A673 (cell line): ENCODE measurements at regions of chr2 and their contacts with region 1.

Region 1: DNA sequence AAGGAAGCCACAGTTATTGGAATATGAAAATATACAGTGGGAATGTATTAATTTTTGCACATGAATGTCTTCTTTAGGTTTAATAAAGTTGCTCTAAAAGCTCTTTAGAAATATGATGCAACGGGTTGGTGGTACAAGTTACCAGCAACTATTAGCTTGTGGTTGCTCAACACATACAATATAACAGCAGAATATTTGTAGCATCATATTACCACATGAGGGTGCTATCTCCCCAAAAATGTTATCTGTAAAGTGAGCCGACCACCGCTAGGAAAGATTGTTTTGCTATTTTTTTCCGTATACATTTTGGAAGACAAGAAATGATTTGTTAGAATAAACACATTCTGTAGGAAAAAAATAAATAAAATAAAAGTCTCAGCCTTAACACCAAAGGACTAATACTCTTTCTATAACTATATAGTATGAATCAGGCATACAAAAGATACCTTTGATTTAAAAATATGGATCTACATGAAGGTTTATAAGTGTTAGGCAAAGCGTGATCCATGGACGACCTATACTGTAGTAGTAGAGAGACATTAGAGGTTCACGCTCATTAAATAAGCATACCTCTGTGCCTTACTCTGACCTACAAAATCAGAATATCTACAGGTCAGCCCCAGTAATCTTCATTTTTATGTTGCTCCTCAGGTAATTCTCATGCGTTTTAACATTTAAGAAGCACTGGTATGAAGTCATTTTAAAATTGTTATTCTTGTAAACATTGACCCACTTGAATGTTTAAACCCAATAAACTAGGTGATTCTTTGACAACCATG is 1110.6 kb upstream of the ACVR2A start:
- DNase-seq: peak; percentile 81
- H3K4me3 ChIP-seq: no peak overlapping the region
- H3K27ac ChIP-seq: no peak overlapping the region
- H3K4me1 ChIP-seq: no peaks in the 10 kb centered on the region
- H3K27me3 ChIP-seq: no peaks in the 10 kb centered on the region
- CTCF ChIP-seq: peak; percentile 78

Region 2: DNA sequence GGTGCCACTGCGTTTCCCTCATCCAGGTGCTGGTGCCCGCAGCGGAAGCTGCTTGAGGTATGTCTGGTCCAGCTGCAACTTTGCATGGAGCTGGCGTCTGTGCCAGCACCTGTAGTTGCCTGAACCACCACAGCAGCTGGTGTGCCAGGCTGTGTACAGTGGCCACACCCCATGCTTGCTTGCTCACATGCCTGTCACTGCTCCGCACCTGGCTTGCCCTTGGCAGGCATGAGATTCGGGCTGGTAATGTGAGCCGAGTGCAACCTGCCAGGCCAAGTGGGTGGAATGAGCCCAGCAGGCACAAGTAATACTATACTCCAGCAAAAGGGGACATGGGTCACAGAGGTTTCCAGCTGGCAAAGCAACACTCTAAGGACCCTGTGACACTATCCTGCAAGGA is 12.7 kb before region 1 on chr2:
- CTCF ChIA-PET with region 1: no interaction called
- POLR2A ChIA-PET with region 1: no interaction called
- intact Hi-C with region 1: no loop called
- DNase-seq: no peak
- H3K4me3 ChIP-seq: no peak overlapping the region
- H3K27ac ChIP-seq: no peak overlapping the region
- H3K4me1 ChIP-seq: no peaks in the 10 kb centered on the region
- H3K27me3 ChIP-seq: no peaks in the 10 kb centered on the region
- CTCF ChIP-seq: no peak

Region 3: GRCh38 chr2:146927080-146927711 is 193.0 kb after region 1 on chr2:
- CTCF ChIA-PET with region 1: no interaction called
- POLR2A ChIA-PET with region 1: no interaction called
- intact Hi-C with region 1: loop called (anchors 5 kb)
- DNase-seq: peak; percentile 73
- H3K4me3 ChIP-seq: no peak overlapping the region
- H3K27ac ChIP-seq: no peak overlapping the region
- H3K4me1 ChIP-seq: no peaks in the 10 kb centered on the region
- H3K27me3 ChIP-seq: no peaks in the 10 kb centered on the region
- CTCF ChIP-seq: peak; percentile 73

Region 4: GRCh38 chr2:147331790-147332419 is 597.7 kb after region 1 on chr2:
- CTCF ChIA-PET with region 1: interaction called, 3 read pairs
- POLR2A ChIA-PET with region 1: no interaction called
- intact Hi-C with region 1: loop called (anchors 5 kb)
- DNase-seq: peak; percentile 57
- H3K4me3 ChIP-seq: no peak overlapping the region
- H3K27ac ChIP-seq: no peak overlapping the region
- H3K4me1 ChIP-seq: no peaks in the 10 kb centered on the region
- H3K27me3 ChIP-seq: no peaks in the 10 kb centered on the region
- CTCF ChIP-seq: peak; percentile 80

Region 5: GRCh38 chr2:147910990-147911473 is 1176.8 kb after region 1 on chr2:
- CTCF ChIA-PET with region 1: interaction called, 3 read pairs
- POLR2A ChIA-PET with region 1: no interaction called
- intact Hi-C with region 1: loop called (anchors 2 kb)
- DNase-seq: peak; percentile 83
- H3K4me3 ChIP-seq: no peak overlapping the region
- H3K27ac ChIP-seq: peak overlapping the region; percentile 14
- H3K4me1 ChIP-seq: peaks cover 32% of the 10 kb centered on the region
- H3K27me3 ChIP-seq: no peaks in the 10 kb centered on the region
- CTCF ChIP-seq: peak; percentile 79

Region 6: GRCh38 chr2:148509288-148509902 is 1775.2 kb after region 1 on chr2:
- CTCF ChIA-PET with region 1: no interaction called
- POLR2A ChIA-PET with region 1: no interaction called
- intact Hi-C with region 1: loop called (anchors 5 kb)
- DNase-seq: peak; percentile 89
- H3K4me3 ChIP-seq: peak overlapping the region; percentile 25
- H3K27ac ChIP-seq: no peak overlapping the region
- H3K4me1 ChIP-seq: no peaks in the 10 kb centered on the region
- H3K27me3 ChIP-seq: no peaks in the 10 kb centered on the region
- CTCF ChIP-seq: peak; percentile 97